AG04449 (cell line): ENCODE measurements at regions of chr11 and their contacts with region 1.

Region 1: DNA sequence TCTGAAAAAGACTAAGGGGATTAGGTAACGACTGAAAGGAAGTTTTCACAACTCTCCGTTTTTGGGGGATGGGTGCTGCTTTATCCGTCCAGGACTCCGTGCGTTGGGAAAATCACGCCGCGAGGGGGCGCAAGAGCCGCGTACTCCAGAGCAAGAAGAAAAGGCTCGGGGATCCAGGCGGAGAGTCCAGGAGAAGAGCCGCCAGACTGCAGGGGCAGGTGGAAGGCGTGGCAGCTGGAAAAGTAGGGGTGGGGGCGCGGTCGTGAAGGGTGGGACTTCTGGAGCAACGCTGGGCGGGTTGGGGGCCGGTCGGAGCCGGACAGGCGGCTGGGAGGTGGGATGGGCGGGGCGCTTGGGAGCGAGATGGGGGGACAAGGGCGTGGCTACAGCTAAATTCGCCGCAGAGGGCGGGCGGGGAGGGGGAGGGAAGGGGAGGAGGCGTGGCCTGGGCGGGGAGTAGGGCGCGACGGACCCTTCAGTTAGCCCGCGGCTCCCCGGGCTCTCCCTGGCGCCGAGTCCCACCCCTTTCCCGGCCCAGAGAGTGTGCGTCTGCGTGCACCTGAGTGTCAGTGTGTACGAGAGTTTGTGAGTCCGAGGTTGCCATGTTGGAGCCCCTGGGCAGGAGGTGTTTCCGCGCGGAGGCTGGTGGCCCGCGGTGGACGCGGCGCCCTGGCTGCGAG is 613 bp upstream of the ARHGEF17 start:
- DNase-seq: peak; percentile 89
- H3K4me3 ChIP-seq: peak overlapping the region; percentile 81
- CTCF ChIP-seq: peak; percentile 82

Region 2: GRCh38 chr11:73184953-73185671 is 122.4 kb before region 1 on chr11:
- CTCF ChIA-PET with region 1: interaction called, 12 read pairs
- POLR2A ChIA-PET with region 1: interaction called, 3 read pairs
- DNase-seq: no peak
- H3K4me3 ChIP-seq: no peak overlapping the region
- CTCF ChIP-seq: peak; percentile 96

Region 3: DNA sequence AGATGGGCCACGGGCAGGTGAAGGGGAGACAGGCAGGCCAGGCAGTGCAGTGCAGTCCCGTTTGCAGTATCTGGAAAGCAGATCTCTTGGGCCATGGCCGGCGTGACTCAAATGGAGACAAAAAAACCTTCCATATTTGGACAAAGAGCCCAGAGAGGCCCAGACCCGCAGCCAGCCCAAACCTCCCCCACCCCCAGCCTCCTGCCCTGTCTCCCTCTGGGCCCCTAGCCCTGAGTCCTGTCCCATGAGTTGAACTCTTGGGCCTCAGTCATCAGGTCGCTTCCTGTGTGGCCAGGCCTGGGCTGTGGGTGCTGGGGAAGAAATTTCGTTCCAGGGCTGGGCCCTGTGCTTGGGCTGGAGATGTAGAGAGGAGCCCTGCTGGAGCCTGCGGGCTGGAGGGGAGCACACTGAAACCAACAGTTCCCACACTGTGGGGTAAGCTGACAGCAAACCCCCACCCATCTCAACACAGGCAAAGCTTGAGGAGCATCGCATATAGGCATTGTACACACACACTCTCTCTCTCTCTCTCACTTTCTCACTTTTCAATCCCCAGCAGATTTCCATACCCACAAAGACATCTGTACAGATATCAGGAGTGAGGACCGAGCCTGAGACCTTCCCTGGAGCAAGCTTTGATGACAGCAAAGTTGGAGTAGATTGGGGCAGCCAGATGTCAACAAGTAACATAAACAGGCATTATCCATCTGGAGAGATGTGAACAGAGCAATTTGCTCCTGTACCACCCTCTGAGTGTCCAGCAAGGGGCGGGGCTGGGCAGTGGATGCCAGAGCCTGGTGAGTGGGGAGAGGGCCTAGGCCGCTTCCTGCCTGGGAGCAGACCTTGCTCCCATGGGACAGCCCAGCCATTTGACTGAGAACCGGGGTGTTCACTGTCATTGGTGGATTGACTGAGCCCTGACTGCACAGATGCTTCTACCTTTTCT is 17.8 kb after region 1 on chr11:
- CTCF ChIA-PET with region 1: interaction called, 252 read pairs
- POLR2A ChIA-PET with region 1: interaction called, 47 read pairs
- DNase-seq: no peak
- H3K4me3 ChIP-seq: no peak overlapping the region
- CTCF ChIP-seq: no peak

Region 4: GRCh38 chr11:73350908-73351636 is 43.6 kb after region 1 on chr11:
- CTCF ChIA-PET with region 1: interaction called, 190 read pairs
- POLR2A ChIA-PET with region 1: interaction called, 4 read pairs
- DNase-seq: no peak
- H3K4me3 ChIP-seq: no peak overlapping the region
- CTCF ChIP-seq: peak; percentile 78

Region 5: GRCh38 chr11:73384872-73385689 is 77.6 kb after region 1 on chr11:
- CTCF ChIA-PET with region 1: interaction called, 16 read pairs
- POLR2A ChIA-PET with region 1: no interaction called
- DNase-seq: no peak
- H3K4me3 ChIP-seq: no peak overlapping the region
- CTCF ChIP-seq: no peak

Region 6: DNA sequence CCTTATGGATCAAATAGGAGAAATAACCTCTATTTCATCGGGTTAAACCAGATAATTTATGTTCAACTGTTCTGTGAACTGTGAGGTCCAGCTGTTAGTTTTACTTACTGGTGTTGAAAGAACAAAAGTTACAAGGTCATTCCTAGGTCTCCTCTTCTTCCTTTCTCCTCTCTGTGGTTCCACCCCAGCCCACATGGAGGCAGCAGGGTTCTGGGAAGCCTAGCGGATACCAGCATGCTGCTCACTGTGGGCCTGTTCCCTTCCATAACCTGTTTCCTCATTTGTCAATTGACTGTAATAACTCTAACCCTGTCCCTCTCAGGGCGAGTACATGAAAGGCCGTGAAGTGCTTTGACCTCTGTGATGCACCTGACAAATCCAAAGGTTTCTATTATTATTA is 96.6 kb after region 1 on chr11:
- CTCF ChIA-PET with region 1: interaction called, 15 read pairs
- POLR2A ChIA-PET with region 1: no interaction called
- DNase-seq: no peak
- H3K4me3 ChIP-seq: no peak overlapping the region
- CTCF ChIP-seq: peak; percentile 80

Region 7: DNA sequence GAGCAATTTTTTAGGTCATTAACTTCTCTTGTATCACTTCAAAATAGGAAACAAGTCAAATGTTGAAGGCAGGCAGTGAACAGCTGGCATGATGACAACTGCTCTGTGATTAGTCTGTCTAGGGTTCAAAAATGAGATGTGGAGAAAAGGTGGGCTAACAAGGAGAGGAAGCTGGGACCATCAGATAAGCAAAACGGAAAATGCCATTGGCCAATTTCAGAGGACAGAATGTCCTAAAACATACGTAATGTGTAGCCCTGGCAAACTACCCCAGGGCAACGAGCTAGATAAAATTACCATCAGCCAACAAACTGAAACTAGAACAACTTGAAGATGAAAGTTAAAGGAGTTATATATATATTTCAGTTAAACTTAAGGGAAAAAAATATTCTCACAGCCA is 161.9 kb after region 1 on chr11:
- CTCF ChIA-PET with region 1: no interaction called
- POLR2A ChIA-PET with region 1: no interaction called
- DNase-seq: no peak
- H3K4me3 ChIP-seq: no peak overlapping the region
- CTCF ChIP-seq: no peak